Head of caudate nucleus (tissue), 42 donors: ENCODE measurements at regions of chr2 and their contacts with region 1.

Region 1: GRCh38 chr2:6352906-6353515 is 512.7 kb downstream of the CMPK2 start:
- DNase-seq: peak; percentile 19 to 87 (median 65)

Region 2: GRCh38 chr2:6224267-6224666 is 128.7 kb before region 1 on chr2:
- intact Hi-C with region 1: no loop called
- DNase-seq: no peak

Region 3: DNA sequence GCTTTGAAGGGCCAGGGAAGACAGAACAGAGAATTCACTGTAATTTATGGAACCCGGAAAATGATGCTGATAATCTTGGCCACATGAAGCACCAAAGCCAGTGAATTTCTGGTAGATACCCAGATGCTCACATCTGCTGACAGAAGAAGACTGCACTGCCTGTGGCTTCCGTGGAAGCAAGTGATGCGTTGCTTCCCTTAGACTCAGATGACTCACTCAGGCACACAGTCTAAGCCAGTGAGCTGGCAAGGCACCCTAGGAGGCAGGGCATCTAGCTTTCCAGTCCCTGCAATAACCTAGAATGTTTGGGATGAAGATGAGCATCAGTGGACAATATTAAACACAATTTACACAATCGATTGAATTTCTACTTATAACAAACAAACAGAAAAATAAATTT is 228.0 kb after region 1 on chr2:
- intact Hi-C with region 1: no loop called
- DNase-seq: no peak

Region 4: DNA sequence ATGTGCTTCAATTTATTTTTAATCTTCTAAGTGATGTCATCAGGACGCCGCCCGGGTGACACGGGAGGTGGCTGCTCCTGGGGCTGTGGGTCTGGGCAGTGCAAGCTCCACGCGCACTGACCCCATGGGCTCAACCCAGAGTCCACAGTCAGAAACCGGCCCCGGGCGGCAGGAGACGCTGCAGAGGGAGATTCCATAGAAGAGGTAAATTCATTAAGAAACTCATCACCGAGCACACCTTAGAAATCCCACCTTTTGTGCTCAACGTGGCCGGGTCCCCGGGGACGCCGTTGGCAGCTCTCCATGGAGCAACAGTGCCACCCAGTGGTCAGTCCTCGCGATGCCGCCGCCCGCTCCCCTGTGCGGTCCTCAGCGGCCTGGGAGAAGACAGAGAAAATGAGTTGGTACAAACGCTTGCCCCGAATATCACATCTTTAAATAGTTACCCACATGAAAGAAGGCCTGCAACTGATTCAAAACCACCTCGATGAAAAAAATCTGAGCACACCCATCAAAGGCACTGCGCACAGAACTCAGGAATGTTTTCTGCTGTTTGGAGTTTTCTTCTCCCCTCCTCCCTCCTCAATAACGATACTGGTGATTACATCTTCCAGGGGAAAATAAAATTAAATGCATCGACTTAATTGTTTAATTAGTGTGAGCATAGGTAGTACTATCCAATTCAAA is 420.1 kb after region 1 on chr2:
- intact Hi-C with region 1: loop called (anchors 2 kb)
- DNase-seq: peak; percentile 61 to 93 (median 84)